AG04450 (cell line): ENCODE measurements at regions of chr19 and their contacts with region 1.

Region 1: DNA sequence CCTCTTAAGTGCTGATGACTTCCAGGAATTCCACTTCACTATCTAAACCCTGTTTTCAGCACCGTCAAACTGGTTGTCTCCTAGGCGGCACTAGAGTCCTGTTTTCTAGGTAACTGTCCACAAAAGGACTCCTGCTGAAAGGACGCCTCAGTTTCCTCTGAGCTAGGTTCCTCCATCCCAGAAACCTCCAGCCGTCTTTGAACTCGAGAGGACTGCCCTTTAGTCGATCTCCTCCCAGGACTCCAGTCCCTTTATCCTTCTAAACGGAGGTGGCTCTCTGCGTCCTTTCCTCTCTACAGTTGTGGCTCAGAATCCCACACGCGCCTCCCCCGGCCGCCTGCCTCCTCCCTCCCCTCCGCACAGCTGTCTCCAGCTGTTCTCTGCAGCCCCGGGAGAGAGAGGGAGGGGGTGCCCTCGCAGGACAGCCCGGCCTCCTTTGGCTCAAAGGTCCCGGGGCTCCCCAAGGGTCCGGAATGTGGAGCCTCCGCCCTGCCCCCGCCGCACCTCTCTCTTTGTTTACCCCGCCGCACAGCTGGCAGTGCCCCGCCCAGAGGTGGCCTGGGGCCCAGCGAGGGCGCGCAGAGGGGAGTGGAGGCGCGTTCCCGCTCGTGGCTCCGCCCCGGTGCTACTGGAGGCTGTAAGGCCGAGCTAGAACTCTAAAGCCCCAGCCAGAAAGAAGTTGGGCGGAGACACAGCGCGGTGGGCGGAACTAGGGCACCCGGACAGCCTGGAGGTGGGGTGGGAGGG is 2.4 kb downstream of the LTBP4 start:
- DNase-seq: peak; percentile 92
- H3K4me3 ChIP-seq: peak overlapping the region; percentile 69
- H3K27ac ChIP-seq: peak overlapping the region; percentile 93
- H3K27me3 ChIP-seq: no peaks in the 10 kb centered on the region
- CTCF ChIP-seq: no peak

Region 2: DNA sequence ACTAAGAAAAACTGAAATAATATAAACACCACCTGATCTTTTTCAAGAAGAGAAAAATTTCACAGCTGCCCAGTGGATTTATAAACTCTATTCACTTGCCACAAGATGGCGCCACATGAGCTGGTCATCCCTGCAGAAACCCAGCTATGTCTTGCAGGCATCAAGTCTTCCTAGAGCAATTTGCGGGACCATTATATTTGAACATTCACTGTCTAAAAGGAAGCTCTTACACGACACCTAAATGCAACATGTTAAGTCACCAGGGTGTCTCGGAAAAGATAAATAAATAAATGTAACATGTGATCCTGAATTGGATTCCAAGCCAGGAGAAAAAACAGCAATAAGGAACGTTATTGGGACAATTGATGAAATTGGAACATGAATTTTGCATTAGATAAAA is 298.2 kb before region 1 on chr19:
- CTCF ChIA-PET with region 1: interaction called, 14 read pairs
- POLR2A ChIA-PET with region 1: no interaction called
- DNase-seq: peak; percentile 83
- H3K4me3 ChIP-seq: no peak overlapping the region
- H3K27ac ChIP-seq: no peak overlapping the region
- H3K27me3 ChIP-seq: no peaks in the 10 kb centered on the region
- CTCF ChIP-seq: peak; percentile 79

Region 3: GRCh38 chr19:40529093-40529954 is 74.2 kb before region 1 on chr19:
- CTCF ChIA-PET with region 1: interaction called, 10 read pairs
- POLR2A ChIA-PET with region 1: no interaction called
- DNase-seq: peak; percentile 54
- H3K4me3 ChIP-seq: peak overlapping the region; percentile 50
- H3K27ac ChIP-seq: no peak overlapping the region
- H3K27me3 ChIP-seq: peaks cover 17% of the 10 kb centered on the region
- CTCF ChIP-seq: peak; percentile 91

Region 4: GRCh38 chr19:40570313-40571004 is 33.1 kb before region 1 on chr19:
- CTCF ChIA-PET with region 1: interaction called, 4 read pairs
- POLR2A ChIA-PET with region 1: interaction called, 14 read pairs
- DNase-seq: peak; percentile 100
- H3K4me3 ChIP-seq: peak overlapping the region; percentile 77
- H3K27ac ChIP-seq: peak overlapping the region; percentile 89
- H3K27me3 ChIP-seq: peaks cover 8% of the 10 kb centered on the region
- CTCF ChIP-seq: no peak

Region 5: DNA sequence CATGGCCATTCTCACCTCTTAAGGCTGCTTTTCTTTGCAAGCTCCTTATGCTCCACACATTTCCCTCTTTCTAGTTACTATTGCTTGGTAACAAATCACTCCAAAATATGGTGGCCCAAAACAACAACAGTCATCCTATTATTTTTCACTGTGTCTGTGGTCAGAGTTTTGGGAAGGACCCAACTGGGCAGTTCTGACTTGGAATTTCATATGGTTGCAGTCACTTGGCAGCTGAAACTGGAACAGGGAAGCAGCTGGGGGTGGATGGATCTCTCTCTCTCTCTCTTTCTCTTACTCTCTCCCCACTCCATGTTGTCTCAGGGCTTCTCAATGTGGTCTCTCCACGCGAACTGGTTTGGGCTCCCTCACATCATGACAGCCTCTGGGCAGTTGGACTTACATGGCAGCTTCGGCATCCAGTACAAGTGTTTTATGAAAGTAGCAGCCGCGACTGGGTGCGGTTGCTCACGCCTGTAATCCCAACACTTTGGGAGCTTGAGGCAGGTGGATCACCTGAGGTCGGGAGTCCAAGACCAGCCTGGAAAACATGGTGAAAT is 47.3 kb after region 1 on chr19:
- CTCF ChIA-PET with region 1: interaction called, 3 read pairs
- POLR2A ChIA-PET with region 1: interaction called, 34 read pairs
- DNase-seq: peak; percentile 36
- H3K4me3 ChIP-seq: no peak overlapping the region
- H3K27ac ChIP-seq: peak overlapping the region; percentile 47
- H3K27me3 ChIP-seq: no peaks in the 10 kb centered on the region
- CTCF ChIP-seq: no peak